ENCODE measurements at regions of chr14 and their contacts with region 1.

Region 1: DNA sequence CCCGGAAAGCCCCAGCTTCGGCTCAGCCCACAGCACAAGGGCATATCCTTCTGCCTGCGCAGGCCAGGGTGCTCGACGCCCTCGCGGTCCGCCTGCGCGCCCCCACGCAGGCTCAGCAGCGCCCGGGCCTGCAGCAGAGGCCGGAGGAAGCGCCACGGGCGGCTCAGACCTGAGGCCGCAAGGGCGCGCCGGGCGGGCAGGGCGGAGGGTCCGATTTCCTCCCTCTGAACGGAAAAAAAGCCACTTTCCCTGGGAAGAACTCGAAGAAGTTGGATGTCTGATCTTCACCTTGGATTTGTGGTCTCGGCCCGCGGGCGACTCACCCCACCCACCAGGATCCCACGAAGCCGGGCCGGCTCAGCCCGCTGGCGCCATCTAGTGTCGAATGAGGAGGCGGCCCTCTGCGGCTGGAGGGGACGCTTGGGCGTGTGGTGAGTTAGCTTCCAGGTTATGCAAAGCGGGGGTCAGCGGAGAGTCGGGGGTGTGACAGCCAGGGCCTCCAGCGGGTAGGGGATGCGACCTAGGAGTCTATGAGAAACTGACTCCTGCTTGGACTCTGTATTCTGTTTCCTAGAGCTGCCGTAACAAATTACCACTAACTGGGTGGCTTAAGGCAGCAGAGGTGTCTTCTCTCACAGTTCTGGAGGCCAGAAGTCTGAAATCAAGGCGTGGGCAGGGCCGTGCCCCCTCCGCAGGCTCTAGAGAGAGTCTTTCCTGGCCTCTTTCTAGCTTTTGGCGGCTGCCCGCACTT is 40.0 kb upstream of the SRSF5 start:
- DNase-seq: peak; percentile 27
- H3K4me3 ChIP-seq: peak overlapping the region; percentile 26 to 70 (median 45)
- H3K27ac ChIP-seq: peak overlapping the region; percentile 56 to 78 (median 64)
- H3K4me1 ChIP-seq: peaks cover 16 to 29% (median 18%) of the 10 kb centered on the region in 3 donors
- H3K27me3 ChIP-seq: no peaks in the 10 kb centered on the region
- CTCF ChIP-seq: peak; percentile 94 to 99 (median 97)
- POLR2A ChIP-seq: no peak

Region 2: GRCh38 chr14:69559581-69560011 is 167.3 kb before region 1 on chr14:
- intact Hi-C with region 1: no loop called
- DNase-seq: no peak
- H3K4me3 ChIP-seq: no peak overlapping the region
- H3K27ac ChIP-seq: no peak overlapping the region
- H3K4me1 ChIP-seq: peaks cover 0 to 6% (median 0%) of the 10 kb centered on the region in 3 donors
- H3K27me3 ChIP-seq: peaks cover 0 to 50% (median 0%) of the 10 kb centered on the region in 4 donors
- CTCF ChIP-seq: no peak
- POLR2A ChIP-seq: no peak

Region 3: DNA sequence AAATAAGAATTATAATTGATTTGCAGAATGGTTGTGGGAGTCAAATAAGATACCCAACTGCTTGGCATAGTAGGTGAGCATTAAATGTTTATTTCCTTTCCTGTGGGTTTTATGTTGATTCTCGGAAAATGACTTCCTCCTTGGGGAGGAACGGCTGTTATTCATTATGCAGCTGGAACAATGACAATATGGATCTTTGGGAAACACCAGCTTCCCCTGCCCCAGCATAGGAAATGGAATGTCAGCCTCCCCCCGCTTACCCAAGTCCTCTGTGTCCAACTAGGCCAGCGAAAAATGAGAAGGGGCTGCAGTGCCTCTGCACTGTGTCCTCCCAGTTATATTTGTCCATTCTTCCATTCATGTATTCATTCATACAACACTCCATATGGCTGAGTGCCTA is 140.5 kb before region 1 on chr14:
- intact Hi-C with region 1: loop called (anchors 2 kb)
- DNase-seq: no peak
- H3K4me3 ChIP-seq: no peak overlapping the region
- H3K27ac ChIP-seq: peak overlapping the region in 1 of 4 donors; percentile 50
- H3K4me1 ChIP-seq: peaks cover 0 to 34% (median 4%) of the 10 kb centered on the region in 3 donors
- H3K27me3 ChIP-seq: no peaks in the 10 kb centered on the region
- CTCF ChIP-seq: no peak
- POLR2A ChIP-seq: no peak

Region 4: DNA sequence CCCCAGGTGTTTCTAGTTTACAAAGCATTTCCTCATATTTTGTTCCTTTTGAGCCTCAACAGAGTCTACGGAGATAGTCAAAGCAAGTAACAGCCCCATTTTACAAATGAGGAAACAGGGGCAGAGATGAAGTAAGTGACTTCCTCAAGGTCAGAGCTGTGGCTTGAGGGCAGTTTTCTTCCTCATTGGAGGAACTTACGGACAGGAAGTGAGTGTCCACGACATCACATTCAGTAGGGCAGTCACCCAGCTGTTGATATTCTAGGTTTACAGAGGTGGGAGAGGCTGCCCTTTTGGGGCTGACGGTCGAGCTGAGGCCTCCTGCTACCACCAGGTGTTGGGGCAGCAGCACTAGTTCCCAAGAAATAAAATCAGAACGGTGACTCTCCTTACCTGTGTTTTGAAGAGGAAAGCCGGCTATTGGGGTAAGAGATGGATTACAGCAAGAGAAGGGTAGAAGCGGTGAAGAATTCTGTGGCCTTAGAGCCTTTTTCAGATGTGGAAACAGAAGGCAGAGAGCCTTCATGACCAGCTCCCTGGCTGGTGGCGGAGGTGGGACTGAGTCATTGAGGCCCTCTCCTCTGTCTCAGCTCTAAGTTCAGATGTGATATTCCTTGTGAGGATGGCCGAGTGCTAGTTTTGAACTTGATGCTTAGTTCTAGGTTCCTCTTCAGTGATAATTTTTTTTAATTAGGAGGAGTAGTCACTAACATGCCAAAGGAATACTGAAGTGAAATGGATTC is 73.8 kb before region 1 on chr14:
- intact Hi-C with region 1: no loop called
- DNase-seq: no peak
- H3K4me3 ChIP-seq: no peak overlapping the region
- H3K27ac ChIP-seq: peak overlapping the region; percentile 59 to 83 (median 80)
- H3K4me1 ChIP-seq: peaks cover 50 to 100% (median 79%) of the 10 kb centered on the region in 3 donors
- H3K27me3 ChIP-seq: no peaks in the 10 kb centered on the region
- CTCF ChIP-seq: no peak
- POLR2A ChIP-seq: no peak

Measured in esophagus squamous epithelium (tissue), 5 donors.